ENCODE measurements at regions of chr5 and their contacts with region 1.

Region 1: DNA sequence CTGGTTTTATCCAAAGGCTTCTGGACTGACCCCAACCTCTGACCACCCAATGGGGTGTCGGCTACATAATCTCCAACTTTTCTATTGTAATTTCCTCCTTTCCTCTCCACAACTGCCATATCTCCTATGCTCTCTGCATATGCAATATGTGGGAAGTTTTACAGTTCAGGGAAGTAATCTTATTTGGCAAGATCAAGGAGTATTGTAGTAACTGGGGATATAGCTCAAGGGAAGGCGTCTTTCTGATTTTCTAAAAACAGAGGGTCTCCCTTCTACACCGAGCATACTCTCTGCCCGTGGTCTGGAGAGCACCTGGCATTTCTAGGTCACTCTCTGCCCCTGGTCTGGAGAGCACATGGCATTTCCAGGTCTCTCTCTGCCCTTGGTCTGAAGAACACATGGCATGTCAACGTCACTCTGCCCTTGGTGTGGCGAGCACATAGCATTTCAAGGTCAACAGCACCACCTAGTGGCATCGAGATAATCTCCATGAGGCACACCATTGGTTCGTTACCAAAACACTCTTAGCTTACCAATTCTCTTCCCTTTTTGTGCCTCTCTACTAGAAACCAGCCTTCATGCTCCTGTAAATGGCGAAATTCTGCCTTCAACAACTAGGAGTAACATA is 616.4 kb upstream of the NUDT12 start:
- DNase-seq: no peak
- H3K4me3 ChIP-seq: no peak overlapping the region
- H3K27ac ChIP-seq: no peak overlapping the region
- H3K4me1 ChIP-seq: no peaks in the 10 kb centered on the region
- H3K27me3 ChIP-seq: no peaks in the 10 kb centered on the region
- CTCF ChIP-seq: peak; percentile 9 to 48 (median 33)
- EP300 ChIP-seq: no peak
- POLR2A ChIP-seq: no peak

Region 2: DNA sequence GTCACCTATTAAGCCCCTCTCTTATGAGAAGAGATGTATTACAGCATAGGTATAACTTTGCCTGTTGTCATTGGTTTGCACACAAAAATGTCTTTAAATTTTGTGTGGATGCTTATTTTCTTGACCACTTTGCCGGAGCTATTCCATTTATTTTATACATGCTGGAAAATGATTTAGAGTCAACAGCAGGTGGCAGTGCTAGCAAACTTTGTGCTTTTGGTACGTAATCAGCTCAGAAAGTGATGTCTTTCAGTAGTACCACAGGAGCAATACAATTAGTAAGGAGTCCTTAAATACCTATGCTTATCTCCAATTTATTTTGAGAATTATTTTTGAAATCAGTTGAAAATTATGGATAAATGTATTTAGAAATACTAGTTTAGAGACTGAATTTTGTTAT is 596.6 kb before region 1 on chr5:
- intact Hi-C with region 1: loop called (anchors 5 kb)
- DNase-seq: no peak
- H3K4me3 ChIP-seq: no peak overlapping the region
- H3K27ac ChIP-seq: no peak overlapping the region
- H3K4me1 ChIP-seq: no peaks in the 10 kb centered on the region
- H3K27me3 ChIP-seq: no peaks in the 10 kb centered on the region
- CTCF ChIP-seq: peak in 2 of 3 experiments; percentile 35 to 51
- EP300 ChIP-seq: no peak
- POLR2A ChIP-seq: no peak